ENCODE measurements at regions of chr19 and their contacts with region 1.

Region 1: GRCh38 chr19:41753936-41754529 is 1.3 kb upstream of the CEACAM6 start:
- DNase-seq: peak; percentile 39 to 72 (median 54)
- H3K4me3 ChIP-seq: no peak overlapping the region
- H3K4me3 Mint-ChIP-seq: no peak overlapping the region
- H3K27ac ChIP-seq: no peak overlapping the region
- H3K27ac Mint-ChIP-seq: no peak overlapping the region
- H3K4me1 ChIP-seq: peaks cover 4% of the 10 kb centered on the region
- H3K4me1 Mint-ChIP-seq: peaks cover 3 to 6% (median 4%) of the 10 kb centered on the region in 3 donors
- H3K27me3 ChIP-seq: peaks cover 8% of the 10 kb centered on the region
- H3K27me3 Mint-ChIP-seq: peaks cover 16 to 51% of the 10 kb centered on the region in 2 donors

Region 2: DNA sequence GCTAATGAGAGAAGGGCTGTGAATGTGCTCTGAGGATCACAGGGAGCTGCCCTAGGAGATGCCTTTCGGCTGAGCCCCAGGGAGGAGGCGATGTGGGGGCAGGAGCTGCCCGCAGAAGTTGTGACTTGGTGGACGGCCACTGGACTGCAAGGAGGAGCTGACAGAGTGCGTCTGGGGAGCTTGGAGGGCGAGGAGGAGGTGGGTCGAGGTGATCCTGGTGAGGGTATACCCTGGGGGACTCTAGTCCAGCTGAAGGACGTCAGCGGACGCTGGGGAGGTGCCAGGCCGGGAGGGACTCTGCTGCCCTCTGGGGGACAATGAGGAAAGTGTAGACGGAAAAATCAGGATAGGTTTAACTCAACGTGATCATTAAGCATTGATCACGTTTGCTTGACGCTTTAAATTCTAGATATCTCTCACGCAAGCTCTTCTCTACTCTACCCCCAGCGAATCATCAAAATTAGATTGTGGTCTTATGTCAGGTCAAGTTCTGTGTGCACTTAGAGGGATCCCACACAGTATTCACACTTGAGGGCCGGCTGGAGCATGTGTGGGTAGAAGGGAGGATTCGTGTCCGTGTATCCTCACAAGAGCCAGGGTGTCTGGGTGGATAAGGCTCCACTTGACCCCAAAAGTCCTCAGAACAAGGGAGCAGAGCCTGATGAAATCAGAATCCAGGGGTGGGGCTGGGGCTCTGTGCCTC is 62.6 kb before region 1 on chr19:
- CTCF ChIA-PET with region 1: no interaction called
- POLR2A ChIA-PET with region 1: no interaction called
- DNase-seq: peak in 1 of 5 donors; percentile 19
- H3K4me3 ChIP-seq: no peak overlapping the region
- H3K4me3 Mint-ChIP-seq: no peak overlapping the region
- H3K27ac ChIP-seq: no peak overlapping the region
- H3K27ac Mint-ChIP-seq: no peak overlapping the region
- H3K4me1 ChIP-seq: no peaks in the 10 kb centered on the region
- H3K4me1 Mint-ChIP-seq: no peaks in the 10 kb centered on the region
- H3K27me3 ChIP-seq: no peaks in the 10 kb centered on the region
- H3K27me3 Mint-ChIP-seq: peaks cover 41 to 67% of the 10 kb centered on the region in 2 donors

Region 3: GRCh38 chr19:41775360-41775695 is 21.3 kb after region 1 on chr19:
- CTCF ChIA-PET with region 1: interaction called, 29 read pairs
- POLR2A ChIA-PET with region 1: interaction called, 3 read pairs
- DNase-seq: no peak
- H3K4me3 ChIP-seq: no peak overlapping the region
- H3K4me3 Mint-ChIP-seq: no peak overlapping the region
- H3K27ac ChIP-seq: no peak overlapping the region
- H3K27ac Mint-ChIP-seq: no peak overlapping the region
- H3K4me1 ChIP-seq: peaks cover 32% of the 10 kb centered on the region
- H3K4me1 Mint-ChIP-seq: peaks cover 21 to 31% (median 30%) of the 10 kb centered on the region in 3 donors
- H3K27me3 ChIP-seq: peaks cover 13% of the 10 kb centered on the region
- H3K27me3 Mint-ChIP-seq: peaks cover 38 to 86% of the 10 kb centered on the region in 2 donors

Region 4: GRCh38 chr19:41785653-41786052 is 31.6 kb after region 1 on chr19:
- CTCF ChIA-PET with region 1: interaction called, 66 read pairs
- POLR2A ChIA-PET with region 1: interaction called, 3 read pairs
- DNase-seq: peak; percentile 46 to 77 (median 65)
- H3K4me3 ChIP-seq: no peak overlapping the region
- H3K4me3 Mint-ChIP-seq: peak overlapping the region in 5 of 7 donors; percentile 4 to 53 (median 52)
- H3K27ac ChIP-seq: no peak overlapping the region
- H3K27ac Mint-ChIP-seq: peak overlapping the region in 2 of 8 donors; percentile 8 to 40
- H3K4me1 ChIP-seq: peaks cover 11% of the 10 kb centered on the region
- H3K4me1 Mint-ChIP-seq: peaks cover 14 to 17% (median 17%) of the 10 kb centered on the region in 3 donors
- H3K27me3 ChIP-seq: peaks cover 8% of the 10 kb centered on the region
- H3K27me3 Mint-ChIP-seq: peaks cover 31 to 53% of the 10 kb centered on the region in 2 donors

Region 5: GRCh38 chr19:41795031-41795461 is 41.0 kb after region 1 on chr19:
- CTCF ChIA-PET with region 1: interaction called, 20 read pairs
- POLR2A ChIA-PET with region 1: no interaction called
- DNase-seq: peak; percentile 26 to 72 (median 37)
- H3K4me3 ChIP-seq: no peak overlapping the region
- H3K4me3 Mint-ChIP-seq: no peak overlapping the region
- H3K27ac ChIP-seq: no peak overlapping the region
- H3K27ac Mint-ChIP-seq: no peak overlapping the region
- H3K4me1 ChIP-seq: no peaks in the 10 kb centered on the region
- H3K4me1 Mint-ChIP-seq: peaks cover 0 to 3% (median 0%) of the 10 kb centered on the region in 3 donors
- H3K27me3 ChIP-seq: peaks cover 4% of the 10 kb centered on the region
- H3K27me3 Mint-ChIP-seq: peaks cover 21 to 38% of the 10 kb centered on the region in 2 donors

Region 6: GRCh38 chr19:41844601-41845000 is 90.6 kb after region 1 on chr19 and contains the start of gene LYPD4:
- CTCF ChIA-PET with region 1: no interaction called
- POLR2A ChIA-PET with region 1: no interaction called
- DNase-seq: no peak
- H3K4me3 ChIP-seq: no peak within 1 kb of the TSS
- H3K4me3 Mint-ChIP-seq: peak within 1 kb of the TSS in 1 of 7 donors; percentile 44
- H3K27ac ChIP-seq: no peak within 1 kb of the TSS
- H3K27ac Mint-ChIP-seq: peak within 1 kb of the TSS in 1 of 8 donors; percentile 63
- H3K4me1 ChIP-seq: no peaks in the 10 kb centered on the region
- H3K4me1 Mint-ChIP-seq: no peaks in the 10 kb centered on the region
- H3K27me3 ChIP-seq: no peaks in the 10 kb centered on the region
- H3K27me3 Mint-ChIP-seq: peaks cover 4 to 7% of the 10 kb centered on the region in 2 donors
- total RNA-seq, gene LYPD4: not detected

Measured in CD8-positive, alpha-beta memory T cell (primary cell).